AG04450 (cell line): ENCODE measurements at regions of chr12 and their contacts with region 1.

Region 1: DNA sequence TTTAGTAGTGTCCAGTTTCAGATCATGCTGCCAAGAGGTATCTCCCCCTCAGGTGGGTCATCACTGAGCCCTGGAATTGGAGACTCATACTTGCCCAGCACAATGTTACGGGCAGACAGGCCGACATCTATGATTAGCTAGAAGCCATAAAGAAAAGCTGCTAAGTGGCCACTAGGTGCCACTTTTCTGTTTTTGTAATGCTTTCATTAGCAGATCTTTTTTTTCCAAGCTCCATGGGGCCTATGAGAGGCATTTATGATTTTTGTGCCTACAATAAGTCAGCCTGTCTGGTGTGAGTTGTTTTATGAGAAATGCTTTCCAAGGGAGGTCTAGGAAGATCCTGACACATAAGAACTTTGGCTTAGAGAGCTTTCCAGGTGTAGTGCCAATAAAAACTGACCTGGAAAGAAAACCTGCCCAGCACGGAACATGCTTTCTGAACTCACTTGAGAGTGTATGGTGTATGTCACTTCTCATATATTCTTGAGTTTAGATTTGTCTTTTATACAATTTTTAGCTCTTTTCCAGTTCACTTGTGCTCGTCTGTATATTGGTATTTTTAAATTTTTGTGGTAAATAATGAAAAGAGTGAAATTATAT is 21.8 kb upstream of the SMCO2 start:
- DNase-seq: peak; percentile 7
- H3K4me3 ChIP-seq: no peak overlapping the region
- H3K27ac ChIP-seq: no peak overlapping the region
- H3K27me3 ChIP-seq: no peaks in the 10 kb centered on the region
- CTCF ChIP-seq: peak; percentile 60

Region 2: GRCh38 chr12:27412047-27412446 is 12.7 kb before region 1 on chr12:
- CTCF ChIA-PET with region 1: interaction called, 13 read pairs
- POLR2A ChIA-PET with region 1: no interaction called
- DNase-seq: no peak
- H3K4me3 ChIP-seq: no peak overlapping the region
- H3K27ac ChIP-seq: no peak overlapping the region
- H3K27me3 ChIP-seq: no peaks in the 10 kb centered on the region
- CTCF ChIP-seq: no peak

Region 3: GRCh38 chr12:27566159-27566558 is 141.4 kb after region 1 on chr12:
- CTCF ChIA-PET with region 1: interaction called, 10 read pairs
- POLR2A ChIA-PET with region 1: no interaction called
- DNase-seq: no peak
- H3K4me3 ChIP-seq: no peak overlapping the region
- H3K27ac ChIP-seq: no peak overlapping the region
- H3K27me3 ChIP-seq: no peaks in the 10 kb centered on the region
- CTCF ChIP-seq: no peak; the same call in 1 of the 2 replicates

Region 4: DNA sequence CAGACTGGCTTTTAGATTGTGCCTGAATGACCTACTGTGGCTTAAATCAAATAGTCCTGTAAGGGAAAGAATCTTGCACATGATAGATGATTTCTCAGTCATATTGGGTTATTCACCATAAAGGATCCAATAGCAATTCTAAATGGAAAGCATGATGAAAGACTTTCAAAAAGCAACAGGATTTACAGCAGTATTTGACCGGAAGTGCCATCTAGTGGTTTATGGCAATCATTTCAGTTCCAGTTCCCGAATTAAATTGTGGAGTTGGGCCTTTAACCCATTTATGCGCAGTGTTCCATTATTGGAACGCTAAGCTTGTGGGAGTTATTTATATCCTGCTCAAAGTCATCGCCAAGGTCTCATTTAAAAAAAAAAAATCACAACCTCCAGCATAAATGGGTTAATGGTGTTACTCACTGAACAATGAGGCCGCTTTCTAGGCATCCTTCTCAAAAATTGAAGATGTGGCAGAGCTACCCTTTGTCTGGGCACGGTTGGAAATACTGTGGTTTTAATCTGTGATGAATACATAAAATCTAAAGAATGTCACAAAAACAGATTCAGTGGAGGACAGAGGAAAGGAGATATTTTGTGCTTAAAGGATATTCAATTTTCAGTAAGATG is 210.7 kb after region 1 on chr12:
- CTCF ChIA-PET with region 1: interaction called, 13 read pairs
- POLR2A ChIA-PET with region 1: no interaction called
- DNase-seq: no peak
- H3K4me3 ChIP-seq: no peak overlapping the region
- H3K27ac ChIP-seq: no peak overlapping the region
- H3K27me3 ChIP-seq: no peaks in the 10 kb centered on the region
- CTCF ChIP-seq: peak; percentile 72

Region 5: DNA sequence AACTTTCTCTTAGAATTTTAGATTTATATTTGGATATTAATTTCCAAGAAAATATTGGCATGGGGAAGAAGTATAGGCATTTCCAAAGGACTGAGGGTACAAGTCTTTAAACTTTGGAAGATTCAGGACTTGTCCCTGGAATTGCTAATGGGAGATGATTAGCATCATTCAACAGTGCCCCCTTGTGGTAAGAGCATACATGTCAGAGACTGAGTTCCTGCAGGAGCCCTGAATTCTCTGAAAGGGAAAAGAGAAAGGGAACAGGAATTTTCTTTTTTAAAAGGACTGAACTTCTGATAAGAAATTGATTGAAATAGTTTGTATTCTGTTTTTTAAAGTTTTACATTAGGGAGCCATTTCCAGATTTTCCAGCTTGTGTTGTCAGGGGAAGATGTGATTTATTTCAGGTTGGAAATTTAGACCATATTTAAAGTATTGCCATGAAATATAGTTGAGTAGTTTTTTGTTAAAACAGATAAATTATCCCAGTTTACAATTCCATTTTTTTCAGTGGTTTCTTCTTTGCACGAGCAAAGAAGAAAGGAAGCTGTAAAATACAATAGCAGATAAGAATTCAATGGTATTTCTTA is 227.5 kb after region 1 on chr12:
- CTCF ChIA-PET with region 1: interaction called, 12 read pairs
- POLR2A ChIA-PET with region 1: no interaction called
- DNase-seq: peak; percentile 63
- H3K4me3 ChIP-seq: no peak overlapping the region
- H3K27ac ChIP-seq: no peak overlapping the region
- H3K27me3 ChIP-seq: no peaks in the 10 kb centered on the region
- CTCF ChIP-seq: peak; percentile 91